Activated T-helper 1 cell treated with anti-CD3 and anti-CD28 coated beads, Interleukin-12 subunit alpha, Interleukin-12 subunit beta, Interleukin-2, Interleukin-4 antibody, amounts not matched to agents 30 ng/mL and 10 ng/mL and 1 ng/mL, durations not matched to agents 14 hours and 24 hours and 36 hours (primary cell): ENCODE measurements at regions of chr5 and their contacts with region 1.

Region 1: DNA sequence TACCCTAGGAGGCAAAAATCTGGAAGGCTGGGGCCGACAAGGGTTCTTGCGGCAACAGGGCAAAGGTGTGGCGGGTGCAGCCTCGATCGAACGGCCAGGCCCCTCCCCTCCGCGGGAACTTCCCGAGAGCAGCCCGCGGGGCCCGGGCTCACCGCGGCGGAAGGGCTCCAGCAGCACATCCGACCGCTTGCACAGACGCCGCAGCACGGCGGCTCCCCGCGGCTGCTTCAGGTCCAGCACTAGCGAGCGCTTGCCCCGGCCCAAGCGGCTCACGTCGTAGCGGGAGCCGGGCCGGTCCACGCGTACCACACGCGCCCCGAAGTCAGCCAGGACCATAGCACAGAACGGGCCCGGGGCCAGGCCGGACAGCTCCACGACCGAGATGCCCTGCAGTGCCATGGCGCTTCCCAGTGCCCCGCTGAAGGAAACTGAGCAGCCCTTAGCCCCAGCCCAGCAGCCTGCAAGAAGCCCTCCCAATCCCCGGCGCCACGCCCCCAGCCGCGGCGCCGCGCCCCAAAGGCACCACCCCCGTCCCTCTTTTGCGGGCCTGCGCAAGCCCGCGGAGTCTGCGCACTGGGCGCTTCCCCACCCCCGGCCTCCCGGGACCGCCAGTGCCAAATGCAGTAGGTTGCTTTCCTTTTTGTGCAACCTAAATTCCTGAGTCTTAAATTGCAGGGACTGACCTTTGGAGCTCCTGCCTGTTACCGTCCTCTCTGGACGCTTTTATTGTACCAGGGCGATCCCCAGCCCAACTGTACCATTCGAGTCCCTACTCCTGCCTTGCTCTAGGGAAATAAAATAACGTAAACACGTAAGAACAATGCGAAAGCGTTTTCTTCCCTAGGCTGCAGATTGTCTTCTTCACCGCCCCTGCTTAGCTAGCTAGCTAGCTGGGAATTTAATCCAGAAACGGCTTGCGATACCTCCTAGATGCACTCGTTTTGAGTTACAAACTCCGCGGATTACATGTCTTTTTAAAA is at the start of gene AMACR:
- DNase-seq: peak; percentile 87
- H3K4me3 Mint-ChIP-seq: peak within 1 kb of the TSS; percentile 85
- H3K27ac Mint-ChIP-seq: peak within 1 kb of the TSS; percentile 79
- H3K4me1 Mint-ChIP-seq: peaks cover 33% of the 10 kb centered on the region
- H3K27me3 Mint-ChIP-seq: no peaks in the 10 kb centered on the region
- total RNA-seq, gene AMACR: 6.8 and 7.1 TPM in 2 replicates

Region 2: GRCh38 chr5:33205727-33206410 is 802.0 kb before region 1 on chr5:
- intact Hi-C with region 1: no loop called
- DNase-seq: no peak
- H3K4me3 Mint-ChIP-seq: no peak overlapping the region
- H3K27ac Mint-ChIP-seq: no peak overlapping the region
- H3K4me1 Mint-ChIP-seq: no peaks in the 10 kb centered on the region
- H3K27me3 Mint-ChIP-seq: no peaks in the 10 kb centered on the region

Region 3: DNA sequence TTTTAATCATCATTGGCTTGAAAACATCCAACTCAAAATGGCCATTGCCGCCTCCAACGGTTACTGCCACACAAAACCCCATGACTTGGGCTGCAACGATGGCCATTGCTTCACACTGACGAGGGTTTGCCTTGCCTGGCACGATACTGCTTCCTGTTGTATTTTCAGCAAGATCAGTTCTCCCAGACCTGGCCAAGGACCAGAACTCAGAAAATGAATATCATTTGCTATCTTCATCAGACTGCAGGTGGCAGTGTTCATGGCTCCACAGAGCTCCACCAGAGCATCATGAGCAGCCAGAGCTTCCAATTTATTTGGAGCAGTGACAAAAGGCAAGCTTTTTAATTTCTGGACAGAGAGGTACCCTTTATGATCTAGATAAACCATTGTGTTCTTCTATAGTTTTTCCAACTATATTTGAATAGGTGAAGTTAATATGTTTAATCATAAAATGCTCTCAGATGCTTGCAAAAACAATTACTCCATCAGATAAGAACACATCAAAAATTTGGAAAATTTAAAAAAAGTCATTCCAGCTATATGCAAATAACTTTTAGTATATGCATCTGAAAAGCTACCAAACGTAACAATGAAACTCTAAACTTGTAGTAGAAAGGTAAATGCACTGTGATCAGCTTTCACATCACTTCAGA is 10.5 kb before region 1 on chr5:
- intact Hi-C with region 1: loop called (anchors 1 kb)
- DNase-seq: no peak
- H3K4me3 Mint-ChIP-seq: no peak overlapping the region
- H3K27ac Mint-ChIP-seq: no peak overlapping the region
- H3K4me1 Mint-ChIP-seq: peaks cover 29% of the 10 kb centered on the region
- H3K27me3 Mint-ChIP-seq: no peaks in the 10 kb centered on the region

Region 4: GRCh38 chr5:34021334-34021733 is 13.4 kb after region 1 on chr5:
- intact Hi-C with region 1: loop called (anchors 1 kb)
- DNase-seq: no peak
- H3K4me3 Mint-ChIP-seq: peak overlapping the region; percentile 16
- H3K27ac Mint-ChIP-seq: peak overlapping the region; percentile 74
- H3K4me1 Mint-ChIP-seq: peaks cover 29% of the 10 kb centered on the region
- H3K27me3 Mint-ChIP-seq: no peaks in the 10 kb centered on the region

Region 5: DNA sequence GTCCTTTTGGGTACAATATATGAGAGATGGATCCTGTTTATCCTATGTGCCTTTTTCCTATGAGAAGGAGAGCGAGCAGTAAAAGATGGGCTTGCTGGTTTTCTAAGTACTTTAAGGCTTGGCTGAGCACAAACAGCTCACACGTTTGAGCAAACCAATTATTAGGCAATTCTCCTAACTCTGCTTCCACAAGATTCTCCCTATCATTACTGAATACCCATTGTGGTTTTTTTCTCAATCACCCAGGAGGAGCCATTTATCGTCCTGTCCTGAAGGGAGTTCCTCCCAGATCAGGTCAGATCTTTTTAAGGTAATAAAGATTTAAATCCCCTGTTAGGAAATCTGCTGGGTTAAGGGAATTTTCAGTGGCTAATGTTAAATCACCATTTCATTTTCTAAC is 54.5 kb after region 1 on chr5:
- intact Hi-C with region 1: no loop called
- DNase-seq: no peak
- H3K4me3 Mint-ChIP-seq: no peak overlapping the region
- H3K27ac Mint-ChIP-seq: no peak overlapping the region
- H3K4me1 Mint-ChIP-seq: no peaks in the 10 kb centered on the region
- H3K27me3 Mint-ChIP-seq: no peaks in the 10 kb centered on the region

Region 6: DNA sequence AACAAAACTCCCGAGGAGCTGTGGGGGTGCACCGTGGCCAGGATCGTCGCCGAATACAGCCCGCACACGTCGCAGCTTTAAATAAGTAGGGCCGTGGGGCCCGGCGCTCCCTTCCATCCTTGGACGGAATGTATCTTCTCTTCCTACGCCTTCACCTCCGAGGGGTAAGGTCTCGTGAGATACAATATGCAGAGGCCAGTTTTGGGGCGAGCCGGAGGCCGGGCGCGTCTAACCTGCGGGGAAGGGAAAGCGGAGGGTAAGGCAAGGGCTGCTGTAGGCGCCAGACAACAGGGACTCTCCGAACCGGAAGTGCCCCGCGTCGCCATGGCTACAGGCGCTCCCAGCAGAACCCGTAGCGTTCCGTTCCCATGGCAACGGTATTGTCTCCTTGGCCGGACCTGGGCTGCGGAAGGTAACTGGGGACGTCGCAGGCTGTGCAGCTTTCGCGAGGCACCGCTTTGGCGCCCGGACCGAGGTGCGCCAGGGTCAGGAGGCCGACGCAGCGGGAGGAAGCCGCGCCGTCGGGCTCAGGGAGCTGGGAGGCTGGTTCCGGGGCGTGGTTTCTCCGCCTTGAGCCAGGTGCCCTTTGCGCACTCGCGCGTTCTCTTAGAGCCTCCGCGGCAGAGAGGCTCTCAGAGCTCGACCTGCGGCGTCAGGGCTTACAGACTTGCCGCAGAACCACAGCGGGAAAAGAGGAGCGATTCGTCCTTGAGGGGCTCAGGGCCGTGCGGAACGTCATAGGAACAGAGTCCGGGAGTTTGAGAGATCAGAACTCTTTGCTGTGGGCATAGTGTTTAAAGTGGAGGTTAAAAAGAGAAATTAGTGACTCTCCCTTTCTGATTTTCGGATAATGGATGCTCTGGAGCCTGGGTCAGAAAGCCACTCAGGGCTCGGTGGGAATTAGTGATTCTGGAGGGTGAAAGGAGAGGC is 831.1 kb after region 1 on chr5 and contains the start of gene TTC23L:
- intact Hi-C with region 1: loop called (anchors 5 kb)
- DNase-seq: peak; percentile 88
- H3K4me3 Mint-ChIP-seq: peak within 1 kb of the TSS; percentile 93
- H3K27ac Mint-ChIP-seq: peak within 1 kb of the TSS; percentile 81
- H3K4me1 Mint-ChIP-seq: peaks cover 15% of the 10 kb centered on the region
- H3K27me3 Mint-ChIP-seq: peaks cover 11% of the 10 kb centered on the region
- total RNA-seq, gene TTC23L: not detected in 2 replicates